Activated CD4-positive, alpha-beta T cell treated with anti-CD3 and anti-CD28 coated beads, Interleukin-2, amount 10 ng/mL, durations not matched to agents 24 days and 14 days (primary cell): ENCODE measurements at regions of chr7 and their contacts with region 1.

Region 1: GRCh38 chr7:92809397-92810241 is 26.8 kb downstream of the CDK6 start:
- DNase-seq: peak; percentile 91
- H3K4me3 Mint-ChIP-seq: peak overlapping the region; percentile 73
- H3K27ac Mint-ChIP-seq: peak overlapping the region; percentile 90
- H3K4me1 Mint-ChIP-seq: peaks cover 75% of the 10 kb centered on the region
- H3K27me3 Mint-ChIP-seq: no peaks in the 10 kb centered on the region

Region 2: DNA sequence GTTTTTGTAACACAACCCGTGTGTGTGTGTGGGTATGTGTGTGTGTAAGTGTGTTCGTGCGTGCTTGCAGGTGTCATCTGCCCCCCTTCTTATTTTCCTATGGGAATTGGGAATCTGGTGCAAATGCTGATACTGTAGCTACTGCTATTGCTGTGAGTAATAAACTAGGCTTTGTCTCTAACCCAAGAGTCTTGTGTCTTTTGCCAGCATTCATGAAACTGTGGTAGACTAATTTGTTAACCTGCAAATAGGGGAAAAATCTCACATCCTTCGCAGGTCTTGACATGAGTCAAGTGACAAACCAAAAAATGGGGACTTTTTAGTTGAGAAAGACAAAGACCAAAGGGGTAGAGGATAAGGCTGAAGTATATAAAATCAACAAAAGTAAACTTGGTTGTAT is 161.6 kb before region 1 on chr7:
- intact Hi-C with region 1: loop called (anchors 1 kb)
- DNase-seq: no peak
- H3K4me3 Mint-ChIP-seq: peak overlapping the region; percentile 70
- H3K27ac Mint-ChIP-seq: peak overlapping the region; percentile 97
- H3K4me1 Mint-ChIP-seq: peaks cover 78% of the 10 kb centered on the region
- H3K27me3 Mint-ChIP-seq: no peaks in the 10 kb centered on the region

Region 3: GRCh38 chr7:92708111-92709042 is 101.2 kb before region 1 on chr7:
- intact Hi-C with region 1: loop called (anchors 1 kb)
- DNase-seq: no peak
- H3K4me3 Mint-ChIP-seq: no peak overlapping the region
- H3K27ac Mint-ChIP-seq: peak overlapping the region; percentile 79
- H3K4me1 Mint-ChIP-seq: peaks cover 34% of the 10 kb centered on the region
- H3K27me3 Mint-ChIP-seq: no peaks in the 10 kb centered on the region

Region 4: GRCh38 chr7:92731335-92732063 is 78.1 kb before region 1 on chr7:
- intact Hi-C with region 1: loop called (anchors 1 kb)
- DNase-seq: no peak
- H3K4me3 Mint-ChIP-seq: peak overlapping the region; percentile 64
- H3K27ac Mint-ChIP-seq: peak overlapping the region; percentile 95
- H3K4me1 Mint-ChIP-seq: peaks cover 54% of the 10 kb centered on the region
- H3K27me3 Mint-ChIP-seq: no peaks in the 10 kb centered on the region

Region 5: DNA sequence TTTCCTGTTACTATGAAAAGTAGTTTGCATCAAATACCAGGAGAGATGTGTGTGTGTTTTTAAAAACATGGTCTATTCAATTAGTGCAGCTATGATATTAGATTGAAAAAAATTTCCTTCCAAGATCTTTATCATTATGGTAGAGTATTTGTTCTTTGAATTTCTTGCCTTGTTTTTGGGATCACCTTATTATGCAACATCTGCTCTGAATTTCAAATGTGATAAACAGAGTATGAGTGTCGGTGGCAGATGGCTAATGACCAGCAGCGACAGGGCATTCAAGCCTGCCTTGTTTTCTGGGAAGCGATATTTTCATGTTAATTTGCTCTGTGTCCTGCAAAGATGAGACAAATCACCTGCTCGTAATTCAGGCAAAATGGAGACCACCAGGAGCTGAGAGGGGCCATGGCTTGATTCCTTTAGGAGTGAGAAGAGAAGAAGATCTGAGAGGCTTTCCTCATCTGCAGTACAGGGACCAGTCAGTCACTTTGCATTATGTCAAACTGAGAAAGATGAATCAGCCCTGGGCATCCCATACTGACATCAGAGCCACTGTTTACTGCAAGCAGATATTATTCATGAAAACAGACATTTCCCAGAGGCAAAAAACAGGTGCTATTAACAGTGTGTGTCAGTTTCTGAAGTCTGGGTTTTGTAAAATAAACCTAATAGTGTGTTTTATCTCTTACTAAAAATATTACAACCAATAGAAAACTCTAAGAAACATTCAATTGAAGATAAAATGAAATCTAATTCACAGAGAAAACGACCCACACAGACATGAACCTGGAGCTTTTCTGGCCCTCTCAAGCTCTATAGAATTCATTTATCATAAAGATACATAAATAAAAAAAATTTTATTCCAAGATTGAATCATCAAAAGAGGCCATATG is 40.9 kb before region 1 on chr7:
- intact Hi-C with region 1: loop called (anchors 1 kb)
- DNase-seq: peak; percentile 66
- H3K4me3 Mint-ChIP-seq: peak overlapping the region; percentile 63
- H3K27ac Mint-ChIP-seq: peak overlapping the region; percentile 94
- H3K4me1 Mint-ChIP-seq: peaks cover 59% of the 10 kb centered on the region
- H3K27me3 Mint-ChIP-seq: no peaks in the 10 kb centered on the region

Region 6: DNA sequence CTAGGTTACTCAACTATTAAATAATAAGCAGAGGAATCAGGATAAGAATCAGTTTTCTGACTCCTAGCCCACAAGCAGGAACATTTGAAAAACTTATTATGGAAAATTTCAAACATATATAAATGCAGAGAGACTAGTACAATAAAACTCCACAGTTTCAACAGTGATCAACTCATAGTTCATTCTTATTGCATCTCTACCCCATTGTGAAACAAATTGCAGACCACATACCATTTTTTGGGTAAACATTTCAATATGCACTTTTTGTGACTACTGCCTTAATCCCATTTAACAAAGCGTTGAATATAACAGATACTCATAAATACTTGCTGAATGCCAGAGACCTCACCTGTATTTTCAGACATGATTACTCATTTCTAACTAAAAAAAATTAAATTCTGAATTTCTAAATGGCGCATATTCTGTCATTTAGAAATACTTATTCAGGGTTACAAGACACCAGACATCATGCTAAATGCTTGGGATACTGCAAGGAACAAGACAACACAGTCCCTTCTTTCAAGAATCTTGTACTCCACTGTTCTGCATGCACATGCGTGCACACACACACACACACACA is 15.4 kb after region 1 on chr7:
- intact Hi-C with region 1: loop called (anchors 1 kb)
- DNase-seq: no peak
- H3K4me3 Mint-ChIP-seq: peak overlapping the region; percentile 34
- H3K27ac Mint-ChIP-seq: peak overlapping the region; percentile 54
- H3K4me1 Mint-ChIP-seq: peaks cover 59% of the 10 kb centered on the region
- H3K27me3 Mint-ChIP-seq: no peaks in the 10 kb centered on the region